ENCODE measurements at regions of chr7 and their contacts with region 1.

Region 1: GRCh38 chr7:48299580-48300169 is 128.4 kb downstream of the ABCA13 start:
- DNase-seq: no peak
- H3K4me3 Mint-ChIP-seq: no peak overlapping the region
- H3K27ac Mint-ChIP-seq: no peak overlapping the region
- H3K4me1 Mint-ChIP-seq: peaks cover 20% of the 10 kb centered on the region
- H3K27me3 Mint-ChIP-seq: peaks cover 6% of the 10 kb centered on the region

Region 2: DNA sequence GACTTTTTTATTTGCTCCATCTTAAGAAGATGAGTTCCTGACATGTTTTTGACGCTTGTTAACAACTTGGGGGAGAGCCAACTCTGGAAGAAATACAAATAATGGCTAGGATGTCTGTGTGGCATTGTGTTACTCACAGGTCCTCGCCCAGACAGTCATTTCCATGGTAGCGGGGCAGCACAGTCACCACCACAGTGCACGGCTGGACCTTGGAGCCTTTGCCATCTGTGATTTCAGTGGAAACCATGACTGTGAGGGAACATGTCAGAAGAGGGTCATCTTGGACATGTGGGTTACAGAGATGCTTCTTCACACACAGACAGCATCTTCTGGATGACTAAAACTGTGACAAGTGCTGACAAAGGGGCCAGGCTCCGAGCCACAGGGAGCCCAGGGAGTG is 425.9 kb before region 1 on chr7:
- intact Hi-C with region 1: loop called (anchors 5 kb)
- DNase-seq: no peak
- H3K4me3 Mint-ChIP-seq: no peak overlapping the region
- H3K27ac Mint-ChIP-seq: no peak overlapping the region
- H3K4me1 Mint-ChIP-seq: peaks cover 33% of the 10 kb centered on the region
- H3K27me3 Mint-ChIP-seq: no peaks in the 10 kb centered on the region

Region 3: DNA sequence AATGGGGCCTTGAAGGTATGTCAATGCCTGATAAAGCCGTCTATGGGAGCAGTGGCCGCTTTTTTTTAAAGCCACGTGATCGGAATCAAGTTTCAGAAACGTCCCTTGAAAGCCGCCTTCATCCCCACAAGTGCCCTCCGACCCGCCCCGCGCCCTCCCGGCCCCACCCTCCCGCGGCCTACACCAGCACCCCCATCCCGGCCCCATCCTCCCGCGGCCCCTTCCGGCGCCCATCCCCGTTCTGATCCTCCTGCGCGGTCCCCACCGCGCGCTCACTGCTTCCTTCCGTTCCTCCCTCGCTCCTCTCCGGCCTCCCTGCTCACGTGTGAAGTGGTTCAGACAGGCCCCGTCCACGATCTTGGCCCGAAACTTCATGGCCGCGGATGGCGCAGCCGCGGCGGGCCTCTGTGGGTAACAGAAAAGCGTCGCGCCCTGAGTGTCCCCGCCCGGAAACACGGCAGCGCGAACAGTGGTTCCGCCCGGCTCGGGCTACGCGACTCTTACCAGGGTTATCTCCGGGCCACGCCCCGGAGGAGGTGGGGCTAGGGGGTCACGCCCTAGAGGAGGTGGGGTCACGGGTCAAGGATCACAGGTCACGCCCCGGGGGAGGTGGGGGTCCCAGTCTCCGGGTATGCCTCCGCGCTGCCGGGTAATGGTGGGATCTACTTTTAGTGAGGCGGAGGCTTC is 320.4 kb before region 1 on chr7 and contains the start of gene HUS1:
- intact Hi-C with region 1: loop called (anchors 10 kb)
- DNase-seq: peak; percentile 90
- H3K4me3 Mint-ChIP-seq: peak within 1 kb of the TSS; percentile 90
- H3K27ac Mint-ChIP-seq: peak within 1 kb of the TSS; percentile 95
- H3K4me1 Mint-ChIP-seq: peaks cover 14% of the 10 kb centered on the region
- H3K27me3 Mint-ChIP-seq: peaks cover 1% of the 10 kb centered on the region
- total RNA-seq, gene HUS1: 33.8 and 36.6 TPM in 2 replicates

Region 4: DNA sequence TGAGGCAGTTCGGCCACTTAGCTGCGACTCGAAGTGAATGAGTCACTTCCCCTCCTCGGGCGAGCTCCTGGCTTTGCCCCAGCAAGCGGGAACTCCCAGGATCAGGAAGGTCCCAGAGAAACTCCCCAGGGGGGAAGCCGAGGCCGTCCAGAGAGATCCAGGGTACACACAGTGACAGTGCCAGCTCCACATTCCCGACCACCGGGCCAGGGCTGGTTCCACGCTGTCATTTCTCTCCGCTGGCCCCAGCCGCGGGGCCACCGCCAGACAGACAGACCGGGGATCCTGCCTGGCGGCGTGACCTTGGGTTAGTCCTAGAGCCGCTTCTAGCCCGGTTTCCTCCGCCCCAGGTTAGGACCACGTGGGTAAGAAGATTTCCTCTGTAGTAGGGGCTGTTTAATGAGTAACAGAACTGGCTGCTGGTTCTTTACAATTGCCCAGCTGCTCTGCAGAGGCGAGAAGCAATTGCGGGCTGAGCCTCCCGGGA is 211.1 kb before region 1 on chr7:
- intact Hi-C with region 1: loop called (anchors 5 kb)
- DNase-seq: no peak
- H3K4me3 Mint-ChIP-seq: peak overlapping the region; percentile 71
- H3K27ac Mint-ChIP-seq: peak overlapping the region; percentile 91
- H3K4me1 Mint-ChIP-seq: peaks cover 65% of the 10 kb centered on the region
- H3K27me3 Mint-ChIP-seq: no peaks in the 10 kb centered on the region

Region 5: GRCh38 chr7:48154792-48155413 is 144.8 kb before region 1 on chr7:
- intact Hi-C with region 1: no loop called
- DNase-seq: peak; percentile 18
- H3K4me3 Mint-ChIP-seq: no peak overlapping the region
- H3K27ac Mint-ChIP-seq: no peak overlapping the region
- H3K4me1 Mint-ChIP-seq: no peaks in the 10 kb centered on the region
- H3K27me3 Mint-ChIP-seq: peaks cover 35% of the 10 kb centered on the region

Region 6: DNA sequence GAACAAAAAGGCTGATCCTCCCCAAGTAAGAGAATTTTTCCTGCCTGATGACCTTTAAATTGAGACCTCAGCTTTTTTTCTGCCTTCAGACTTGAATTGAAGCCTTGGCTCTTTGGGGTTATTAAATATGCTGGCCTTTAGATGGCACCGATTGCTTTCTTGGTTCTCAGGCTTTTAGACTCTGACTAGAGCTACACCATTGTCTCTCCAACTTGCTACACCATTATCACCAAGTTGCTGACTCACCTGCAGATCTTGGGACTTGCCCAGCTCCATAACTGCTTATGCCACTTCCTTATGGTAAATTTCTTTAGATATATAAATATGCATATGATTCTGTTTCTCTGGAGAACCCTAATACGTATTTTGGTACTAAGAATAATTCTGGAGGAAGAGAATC is 131.5 kb before region 1 on chr7:
- intact Hi-C with region 1: no loop called
- DNase-seq: no peak
- H3K4me3 Mint-ChIP-seq: no peak overlapping the region
- H3K27ac Mint-ChIP-seq: no peak overlapping the region
- H3K4me1 Mint-ChIP-seq: no peaks in the 10 kb centered on the region
- H3K27me3 Mint-ChIP-seq: peaks cover 34% of the 10 kb centered on the region

Region 7: DNA sequence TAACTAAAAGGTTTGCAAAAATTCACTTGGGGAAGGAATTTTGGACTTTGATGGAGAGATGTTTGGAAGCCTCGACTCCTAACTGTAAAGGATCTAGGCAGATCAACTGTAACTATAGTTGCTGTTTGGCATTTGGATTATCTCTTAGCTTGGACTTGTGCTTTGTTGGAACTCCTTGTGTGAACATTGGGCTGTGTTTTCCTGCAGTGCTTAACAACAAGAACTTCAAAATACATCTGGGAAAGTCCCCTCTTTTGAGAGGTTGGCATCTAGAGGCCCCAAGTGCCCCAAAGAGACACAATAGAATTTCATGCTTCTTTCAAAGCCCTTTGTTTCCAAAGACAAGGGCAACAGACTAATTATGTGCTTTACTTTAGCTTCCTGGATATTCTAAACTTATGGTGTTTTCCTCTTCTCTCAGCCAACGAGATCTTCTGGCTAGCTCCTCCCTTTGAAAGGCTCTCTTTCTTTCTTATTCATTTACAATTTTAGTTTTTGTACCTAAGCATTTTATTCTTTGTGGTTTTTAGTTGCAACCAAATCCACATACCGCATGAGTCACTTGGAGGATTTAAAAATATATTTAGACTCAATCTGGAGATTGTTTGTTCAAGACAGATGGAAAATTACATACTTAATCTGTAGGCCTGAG is 116.8 kb before region 1 on chr7:
- intact Hi-C with region 1: loop called (anchors 5 kb)
- DNase-seq: no peak
- H3K4me3 Mint-ChIP-seq: no peak overlapping the region
- H3K27ac Mint-ChIP-seq: peak overlapping the region; percentile 31
- H3K4me1 Mint-ChIP-seq: peaks cover 14% of the 10 kb centered on the region
- H3K27me3 Mint-ChIP-seq: peaks cover 11% of the 10 kb centered on the region

Region 8: DNA sequence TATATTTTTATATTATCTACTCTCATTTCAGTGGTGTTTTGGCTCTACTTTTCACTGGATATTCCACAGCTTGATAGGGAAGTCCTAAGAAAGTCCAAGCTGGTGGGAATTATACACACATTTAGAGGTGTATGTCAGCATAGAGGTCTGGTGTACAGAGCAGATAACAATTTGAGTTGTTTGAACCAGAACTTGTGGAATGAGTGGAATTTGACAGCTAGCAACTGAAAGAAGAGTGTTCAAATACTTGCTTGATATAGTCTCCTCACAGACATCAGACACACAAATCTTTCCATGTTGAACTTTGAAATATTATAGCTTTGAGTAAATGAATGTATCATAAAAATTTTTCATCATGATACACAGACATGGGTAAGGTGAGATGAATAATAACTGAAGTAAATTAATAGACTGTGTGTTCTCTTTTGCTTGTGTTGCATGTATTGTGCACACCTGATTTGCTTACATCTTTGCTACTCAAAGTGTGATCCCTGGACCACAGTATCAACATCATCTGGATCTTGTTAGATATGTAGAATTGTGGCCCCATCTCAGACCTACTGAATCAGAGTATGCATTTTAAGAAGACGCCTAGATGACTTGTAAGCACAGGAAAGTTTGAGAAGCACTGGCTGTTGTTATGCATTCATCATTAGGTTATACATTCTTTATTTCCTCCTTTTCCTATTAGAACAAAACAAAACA is 36.9 kb before region 1 on chr7:
- intact Hi-C with region 1: no loop called
- DNase-seq: no peak
- H3K4me3 Mint-ChIP-seq: no peak overlapping the region
- H3K27ac Mint-ChIP-seq: no peak overlapping the region
- H3K4me1 Mint-ChIP-seq: peaks cover 8% of the 10 kb centered on the region
- H3K27me3 Mint-ChIP-seq: peaks cover 30% of the 10 kb centered on the region

Region 9: DNA sequence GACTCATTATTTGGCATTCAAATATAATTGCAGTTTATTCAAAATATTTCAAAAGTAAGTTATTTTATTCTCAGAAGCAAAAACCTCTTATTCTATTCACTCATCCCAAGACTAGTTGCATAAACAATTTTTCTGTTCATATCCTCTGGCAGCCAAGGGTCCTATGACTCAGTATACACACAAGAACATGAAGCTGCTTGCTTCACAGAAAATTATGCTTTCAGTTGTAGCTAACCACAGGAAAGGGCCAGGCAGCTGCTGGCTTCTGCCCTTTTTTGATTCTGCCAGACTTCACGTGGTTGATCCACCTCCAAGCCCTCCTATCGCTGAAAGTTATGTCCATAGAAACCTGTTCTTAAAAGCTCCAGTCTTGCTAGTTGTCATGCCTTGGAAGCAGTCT is 19.6 kb before region 1 on chr7:
- intact Hi-C with region 1: loop called (anchors 1 kb)
- DNase-seq: no peak
- H3K4me3 Mint-ChIP-seq: no peak overlapping the region
- H3K27ac Mint-ChIP-seq: no peak overlapping the region
- H3K4me1 Mint-ChIP-seq: peaks cover 50% of the 10 kb centered on the region
- H3K27me3 Mint-ChIP-seq: peaks cover 11% of the 10 kb centered on the region

Region 10: GRCh38 chr7:49166441-49166840 is 866.8 kb after region 1 on chr7:
- intact Hi-C with region 1: loop called (anchors 5 kb)
- DNase-seq: no peak
- H3K4me3 Mint-ChIP-seq: no peak overlapping the region
- H3K27ac Mint-ChIP-seq: no peak overlapping the region
- H3K4me1 Mint-ChIP-seq: no peaks in the 10 kb centered on the region
- H3K27me3 Mint-ChIP-seq: no peaks in the 10 kb centered on the region